ENCODE measurements at regions of chr17 and their contacts with region 1.

Region 1: GRCh38 chr17:45384047-45384788 is 48.5 kb downstream of the ARHGAP27 start:
- DNase-seq: no peak
- ATAC-seq: no peak
- H3K4me3 ChIP-seq: no peak overlapping the region
- H3K27ac ChIP-seq: no peak overlapping the region
- H3K4me1 ChIP-seq: peaks cover 14% of the 10 kb centered on the region
- H3K27me3 ChIP-seq: no peaks in the 10 kb centered on the region
- CTCF ChIP-seq: no peak

Region 2: GRCh38 chr17:45277216-45277849 is 106.9 kb before region 1 on chr17:
- intact Hi-C with region 1: loop called (anchors 5 kb)
- DNase-seq: peak; percentile 97
- ATAC-seq: peak; percentile 89 to 93
- H3K4me3 ChIP-seq: no peak overlapping the region
- H3K27ac ChIP-seq: peak overlapping the region; percentile 71
- H3K4me1 ChIP-seq: peaks cover 30% of the 10 kb centered on the region
- H3K27me3 ChIP-seq: no peaks in the 10 kb centered on the region
- CTCF ChIP-seq: peak; percentile 73

Region 3: DNA sequence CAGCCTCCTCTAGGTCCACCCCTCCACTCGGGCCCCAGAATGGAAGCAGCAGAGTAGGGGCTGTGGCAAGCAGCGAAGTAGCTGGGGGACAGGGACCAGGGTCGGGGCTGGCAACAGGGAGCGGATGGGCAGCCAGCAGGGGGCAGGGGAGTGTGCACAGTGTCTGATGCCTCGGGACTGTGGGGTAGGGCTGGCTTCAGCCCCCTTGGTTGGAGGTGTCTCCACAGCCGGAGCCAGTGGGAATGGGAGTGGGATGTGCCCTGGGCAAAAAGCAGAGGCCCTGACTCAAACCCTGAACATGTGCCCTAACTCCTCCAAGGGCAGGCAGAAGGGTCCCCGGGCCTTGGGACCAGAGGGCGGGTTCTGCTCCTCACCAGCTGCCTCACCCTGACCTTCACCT is 66.9 kb after region 1 on chr17:
- intact Hi-C with region 1: no loop called
- DNase-seq: no peak
- ATAC-seq: no peak
- H3K4me3 ChIP-seq: no peak overlapping the region
- H3K27ac ChIP-seq: no peak overlapping the region
- H3K4me1 ChIP-seq: peaks cover 17% of the 10 kb centered on the region
- H3K27me3 ChIP-seq: no peaks in the 10 kb centered on the region
- CTCF ChIP-seq: no peak

Measured in lower lobe of right lung (tissue), 2 donors.